AG04449 (cell line): ENCODE measurements at regions of chr4 and their contacts with region 1.

Region 1: DNA sequence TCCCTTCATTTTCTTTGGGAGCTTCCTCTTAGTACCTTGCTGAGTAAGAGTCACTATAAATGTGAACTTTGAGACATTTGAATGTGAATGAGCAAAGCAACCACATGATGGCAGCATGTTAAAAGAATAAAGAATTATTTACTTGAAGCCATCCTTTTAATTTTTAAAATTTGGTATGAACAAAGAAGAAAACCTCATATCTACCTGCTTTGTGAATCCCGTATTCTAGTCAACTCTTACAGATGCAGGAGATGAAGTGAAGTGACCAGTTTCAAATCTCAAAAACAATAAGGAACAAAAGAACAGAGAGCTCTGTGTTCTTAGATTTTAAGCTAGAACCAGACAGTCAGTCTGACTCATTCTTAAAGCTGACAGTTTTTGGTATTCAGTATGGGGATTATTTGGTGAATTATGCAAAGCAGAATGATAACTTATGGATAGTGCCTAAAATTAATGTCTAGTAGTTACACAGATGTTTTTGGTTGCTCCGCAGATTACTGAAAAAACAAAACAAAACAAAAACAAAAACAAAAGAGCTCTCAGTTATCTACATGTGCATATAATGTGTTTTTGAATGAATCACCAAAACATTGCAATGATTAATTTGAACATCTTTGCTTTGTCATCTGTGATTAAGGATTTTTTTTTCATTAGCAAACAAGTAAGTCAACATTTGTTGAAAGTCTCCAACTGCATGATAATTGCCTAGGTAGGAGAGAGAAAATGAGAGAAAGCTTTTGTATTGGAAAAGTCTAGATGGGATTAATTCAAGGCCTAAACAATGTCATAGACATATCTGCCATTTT is 48.2 kb upstream of the H2AZ1 start:
- DNase-seq: no peak
- H3K4me3 ChIP-seq: no peak overlapping the region
- CTCF ChIP-seq: peak; percentile 7

Region 2: GRCh38 chr4:99983289-99983943 is 14.8 kb before region 1 on chr4:
- CTCF ChIA-PET with region 1: interaction called, 19 read pairs
- POLR2A ChIA-PET with region 1: no interaction called
- DNase-seq: no peak
- H3K4me3 ChIP-seq: no peak overlapping the region
- CTCF ChIP-seq: no peak

Region 3: GRCh38 chr4:100063355-100063754 is 65.1 kb after region 1 on chr4:
- CTCF ChIA-PET with region 1: interaction called, 15 read pairs
- POLR2A ChIA-PET with region 1: no interaction called
- DNase-seq: no peak
- H3K4me3 ChIP-seq: no peak overlapping the region
- CTCF ChIP-seq: no peak